ENCODE measurements at regions of chr3 and their contacts with region 1.

Region 1: GRCh38 chr3:125374996-125375941 is at the start of gene ZNF148:
- DNase-seq: peak; percentile 82 to 87
- ATAC-seq: peak; percentile 97 to 98
- H3K4me3 ChIP-seq: peak within 1 kb of the TSS; percentile 69 to 88 (median 78)
- H3K27ac ChIP-seq: peak within 1 kb of the TSS; percentile 84 to 95 (median 92)
- H3K4me1 ChIP-seq: peaks cover 13 to 21% of the 10 kb centered on the region in 2 donors
- H3K27me3 ChIP-seq: no peaks in the 10 kb centered on the region
- CTCF ChIP-seq: no peak
- POLR2A ChIP-seq: peak; percentile 53 to 79
- total RNA-seq, gene ZNF148: 17.0 to 34.9 (median 20.0) TPM

Region 2: GRCh38 chr3:125024817-125025216 is 350.5 kb before region 1 on chr3:
- in situ Hi-C with region 1: no loop called
- intact Hi-C with region 1: loop called (anchors 10 kb)
- DNase-seq: peak; percentile 82 to 91
- ATAC-seq: peak; percentile 98 to 99
- H3K4me3 ChIP-seq: no peak overlapping the region
- H3K27ac ChIP-seq: peak overlapping the region; percentile 40 to 75 (median 58)
- H3K4me1 ChIP-seq: peaks cover 17 to 30% of the 10 kb centered on the region in 2 donors
- H3K27me3 ChIP-seq: no peaks in the 10 kb centered on the region
- CTCF ChIP-seq: no peak
- POLR2A ChIP-seq: no peak

Region 3: DNA sequence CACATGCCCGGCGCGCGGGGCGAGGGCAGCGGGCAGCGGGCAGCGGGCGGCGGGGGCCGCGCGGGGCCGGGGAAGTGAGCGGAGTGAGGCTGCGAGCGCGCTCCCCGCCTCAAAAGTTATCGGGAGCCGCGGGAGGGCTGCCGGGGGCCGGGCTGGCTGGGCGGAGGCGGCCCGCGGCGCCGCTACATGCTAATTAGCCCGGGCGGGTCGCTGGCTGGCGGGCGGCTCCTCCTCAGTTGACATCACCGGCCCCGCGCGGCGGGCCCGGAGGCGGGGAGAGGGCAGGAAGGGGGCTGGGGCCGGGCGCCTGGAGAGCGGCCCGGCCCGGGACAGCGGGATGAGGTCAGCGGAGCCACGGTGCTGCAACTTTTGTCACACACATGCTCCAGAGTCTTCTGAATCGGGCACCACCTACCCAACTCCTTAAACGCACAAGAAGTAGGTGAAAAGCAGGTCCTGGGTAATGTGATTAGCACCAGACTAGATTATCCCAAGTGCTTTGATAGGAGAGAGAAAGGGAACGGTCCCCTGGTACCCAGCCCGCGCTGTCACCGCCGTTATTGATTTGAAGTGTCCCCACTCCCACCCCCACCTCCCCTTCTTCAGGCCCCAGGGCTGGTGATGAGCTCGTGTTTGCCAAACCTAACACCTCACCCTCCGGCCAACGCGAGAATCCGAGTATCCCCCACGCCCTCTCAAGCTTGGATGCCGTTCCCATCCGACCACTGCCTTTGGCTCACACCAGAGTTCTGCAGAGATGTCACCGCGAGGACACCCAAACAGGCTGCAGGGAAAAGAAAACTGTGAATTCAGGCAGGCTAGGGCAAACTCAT is 319.1 kb before region 1 on chr3 and contains the start of gene HEG1:
- in situ Hi-C with region 1: no loop called
- intact Hi-C with region 1: loop called (anchors 10 kb)
- DNase-seq: peak; percentile 80 to 89
- ATAC-seq: peak; percentile 65 to 73
- H3K4me3 ChIP-seq: peak within 1 kb of the TSS; percentile 69 to 76 (median 73)
- H3K27ac ChIP-seq: peak within 1 kb of the TSS; percentile 84 to 89 (median 89)
- H3K4me1 ChIP-seq: peaks cover 41 to 57% of the 10 kb centered on the region in 2 donors
- H3K27me3 ChIP-seq: no peaks in the 10 kb centered on the region
- CTCF ChIP-seq: no peak
- POLR2A ChIP-seq: peak; percentile 75 to 85
- total RNA-seq, gene HEG1: 9.8 to 27.1 (median 17.6) TPM

Region 4: GRCh38 chr3:125357032-125357658 is 18.1 kb before region 1 on chr3:
- in situ Hi-C with region 1: no loop called
- intact Hi-C with region 1: loop called (anchors 2 kb)
- DNase-seq: peak; percentile 34 to 40
- ATAC-seq: peak; percentile 54 to 75
- H3K4me3 ChIP-seq: peak overlapping the region; percentile 64 to 75 (median 70)
- H3K27ac ChIP-seq: peak overlapping the region; percentile 78 to 91 (median 85)
- H3K4me1 ChIP-seq: peaks cover 31 to 51% of the 10 kb centered on the region in 2 donors
- H3K27me3 ChIP-seq: no peaks in the 10 kb centered on the region
- CTCF ChIP-seq: no peak
- POLR2A ChIP-seq: peak; percentile 21 to 57

Region 5: DNA sequence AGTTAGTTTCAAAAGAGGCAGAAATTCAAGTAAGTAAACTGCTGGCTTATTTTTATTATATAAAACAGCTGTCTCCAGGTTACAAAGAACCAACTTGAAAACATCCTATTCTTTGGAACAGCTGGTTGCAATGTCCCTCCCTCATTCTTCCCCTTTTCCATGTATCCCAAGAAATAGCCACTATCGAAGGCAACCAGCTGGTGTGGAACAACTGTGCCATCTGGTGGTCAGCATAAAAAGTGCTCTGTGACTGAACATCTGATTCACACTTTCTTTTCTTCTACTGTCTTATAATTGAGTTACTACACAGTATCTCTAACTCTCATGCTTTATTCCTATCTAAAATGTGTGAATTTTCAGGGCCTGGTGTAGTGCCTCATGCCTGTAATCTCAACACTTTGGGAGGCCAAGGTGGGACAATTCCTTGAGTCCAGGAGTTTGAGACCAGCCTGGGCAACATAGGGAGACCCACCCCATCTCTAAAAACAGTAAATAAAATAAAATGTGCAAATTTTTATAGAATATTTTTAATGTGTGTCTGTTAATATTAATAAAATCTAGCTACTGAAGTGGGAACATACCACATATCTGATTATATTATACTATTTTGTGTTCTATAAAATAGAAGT is 210.4 kb after region 1 on chr3:
- in situ Hi-C with region 1: no loop called
- intact Hi-C with region 1: loop called (anchors 5 kb)
- DNase-seq: no peak
- ATAC-seq: peak; percentile 72 to 78
- H3K4me3 ChIP-seq: no peak overlapping the region
- H3K27ac ChIP-seq: peak overlapping the region; percentile 37 to 95 (median 92)
- H3K4me1 ChIP-seq: peaks cover 52 to 65% of the 10 kb centered on the region in 2 donors
- H3K27me3 ChIP-seq: no peaks in the 10 kb centered on the region
- CTCF ChIP-seq: peak; percentile 71 to 85 (median 78)
- POLR2A ChIP-seq: no peak

Measured in gastrocnemius medialis (tissue), 4 donors.